B cell (primary cell): ENCODE measurements at regions of chr1 and their contacts with region 1.

Region 1: DNA sequence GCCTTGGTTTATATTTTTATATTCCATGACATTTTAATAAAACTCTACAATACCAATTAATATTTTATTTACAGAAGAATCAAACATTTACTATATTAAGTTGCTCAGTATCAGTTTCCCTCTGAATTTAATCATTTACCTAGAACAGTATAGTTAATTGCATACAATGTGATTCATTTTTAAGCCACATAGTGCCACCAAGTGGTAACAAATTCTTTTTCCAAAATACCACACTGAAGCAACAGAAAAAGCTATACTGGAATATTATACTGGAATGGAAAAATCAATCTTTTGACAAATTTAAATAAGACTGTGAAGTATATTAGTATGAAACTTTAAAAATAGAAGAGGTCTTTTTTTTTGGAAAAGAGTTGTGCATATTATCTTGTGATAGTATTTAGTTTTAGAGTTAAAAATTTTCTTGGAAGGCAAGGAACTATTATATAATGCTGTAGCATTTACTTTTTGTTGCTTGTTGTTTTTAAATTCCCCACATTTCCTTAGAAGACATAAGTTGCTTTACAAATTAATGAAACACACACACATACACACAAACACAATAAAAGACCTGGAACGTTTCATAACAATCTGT is 57.3 kb downstream of the ZNF644 start:
- DNase-seq: no peak
- ATAC-seq: no peak
- H3K4me3 ChIP-seq: no peak overlapping the region
- H3K4me3 Mint-ChIP-seq: no peak overlapping the region
- H3K27ac ChIP-seq: no peak overlapping the region
- H3K27ac Mint-ChIP-seq: no peak overlapping the region
- H3K4me1 ChIP-seq: no peaks in the 10 kb centered on the region
- H3K4me1 Mint-ChIP-seq: peaks cover 48% of the 10 kb centered on the region
- H3K27me3 ChIP-seq: no peaks in the 10 kb centered on the region
- H3K27me3 Mint-ChIP-seq: no peaks in the 10 kb centered on the region
- CTCF ChIP-seq: peak; percentile 12

Region 2: DNA sequence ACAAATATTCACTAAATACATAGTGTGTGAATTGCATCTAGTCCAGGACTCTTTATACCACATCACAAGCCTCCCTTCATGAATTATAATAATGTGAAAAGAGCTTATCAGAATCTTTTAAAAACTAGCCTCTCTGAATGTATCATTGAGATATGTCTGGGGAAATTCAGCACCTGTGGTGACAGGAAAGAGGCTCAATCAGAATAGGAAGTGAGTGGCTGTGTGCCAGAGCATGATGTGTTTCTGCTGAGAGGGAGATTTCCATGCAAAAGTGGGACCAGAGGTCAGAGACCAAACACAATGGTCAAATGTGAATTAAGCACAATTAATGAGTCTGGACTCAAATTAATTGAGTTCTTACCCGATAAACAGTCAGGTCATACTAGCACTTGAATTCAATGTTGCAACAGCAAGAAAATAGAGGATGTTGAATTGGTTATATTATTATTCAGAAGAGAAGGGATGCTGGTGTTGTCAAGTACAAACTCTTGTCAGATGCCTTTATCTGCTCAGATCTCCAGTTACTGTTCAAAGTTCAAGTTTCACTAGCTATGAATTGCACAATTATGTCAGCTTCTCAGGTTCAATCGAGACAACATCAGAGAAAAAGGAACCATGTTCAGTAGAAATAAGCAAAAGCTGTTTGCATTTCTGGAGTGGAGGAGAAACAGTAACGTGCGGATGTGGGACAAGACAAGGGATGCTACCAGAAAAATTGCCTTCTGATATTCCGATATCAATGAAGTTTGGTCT is 743.4 kb before region 1 on chr1:
- CTCF ChIA-PET with region 1: no interaction called
- POLR2A ChIA-PET with region 1: no interaction called
- intact Hi-C with region 1: no loop called
- DNase-seq: no peak
- ATAC-seq: no peak
- H3K4me3 ChIP-seq: no peak overlapping the region
- H3K4me3 Mint-ChIP-seq: no peak overlapping the region
- H3K27ac ChIP-seq: no peak overlapping the region
- H3K27ac Mint-ChIP-seq: no peak overlapping the region
- H3K4me1 ChIP-seq: no peaks in the 10 kb centered on the region
- H3K4me1 Mint-ChIP-seq: no peaks in the 10 kb centered on the region
- H3K27me3 ChIP-seq: no peaks in the 10 kb centered on the region
- H3K27me3 Mint-ChIP-seq: peaks cover 3% of the 10 kb centered on the region
- CTCF ChIP-seq: no peak

Region 3: DNA sequence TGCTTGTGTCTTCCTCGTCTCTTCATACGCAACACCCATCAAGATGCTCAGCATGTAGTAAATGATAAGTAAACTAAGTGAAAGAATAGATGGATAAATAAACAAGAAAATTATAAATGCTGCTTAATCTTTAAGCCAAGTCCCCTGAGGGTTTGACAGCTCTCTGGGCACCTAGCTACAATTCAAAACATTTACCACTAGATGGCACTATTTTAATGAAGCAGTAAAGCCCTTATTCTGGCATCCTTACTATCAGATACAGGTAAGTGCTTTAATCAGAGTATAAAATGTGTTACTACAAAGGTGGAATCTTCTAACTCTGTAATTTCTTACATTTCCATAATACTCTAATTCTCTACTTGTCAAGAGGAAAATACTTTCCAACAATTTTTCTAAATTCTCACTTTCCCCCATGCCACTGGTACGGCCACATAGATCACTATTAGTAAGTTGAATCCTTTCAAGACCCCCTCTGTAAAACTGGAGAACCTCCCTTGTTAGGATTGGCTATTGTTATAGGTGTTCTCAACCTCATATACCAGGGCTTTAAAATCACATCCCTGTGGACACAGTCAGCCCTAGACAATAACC is 385.2 kb before region 1 on chr1:
- CTCF ChIA-PET with region 1: interaction called, 8 read pairs
- POLR2A ChIA-PET with region 1: no interaction called
- intact Hi-C with region 1: loop called (anchors 2 kb)
- DNase-seq: peak; percentile 50
- ATAC-seq: no peak
- H3K4me3 ChIP-seq: no peak overlapping the region
- H3K4me3 Mint-ChIP-seq: no peak overlapping the region
- H3K27ac ChIP-seq: no peak overlapping the region
- H3K27ac Mint-ChIP-seq: no peak overlapping the region
- H3K4me1 ChIP-seq: no peaks in the 10 kb centered on the region
- H3K4me1 Mint-ChIP-seq: no peaks in the 10 kb centered on the region
- H3K27me3 ChIP-seq: no peaks in the 10 kb centered on the region
- H3K27me3 Mint-ChIP-seq: peaks cover 15% of the 10 kb centered on the region
- CTCF ChIP-seq: peak; percentile 83

Region 4: GRCh38 chr1:90721210-90722194 is 243.0 kb before region 1 on chr1:
- CTCF ChIA-PET with region 1: no interaction called
- POLR2A ChIA-PET with region 1: no interaction called
- intact Hi-C with region 1: loop called (anchors 10 kb)
- DNase-seq: peak; percentile 67
- ATAC-seq: no peak
- H3K4me3 ChIP-seq: no peak overlapping the region
- H3K4me3 Mint-ChIP-seq: no peak overlapping the region
- H3K27ac ChIP-seq: no peak overlapping the region
- H3K27ac Mint-ChIP-seq: no peak overlapping the region
- H3K4me1 ChIP-seq: peaks cover 48 to 68% of the 10 kb centered on the region in 2 donors
- H3K4me1 Mint-ChIP-seq: peaks cover 37% of the 10 kb centered on the region
- H3K27me3 ChIP-seq: peaks cover 0 to 93% (median 82%) of the 10 kb centered on the region in 4 experiments
- H3K27me3 Mint-ChIP-seq: peaks cover 79% of the 10 kb centered on the region
- CTCF ChIP-seq: peak; percentile 77

Region 5: GRCh38 chr1:90925928-90926869 is 38.3 kb before region 1 on chr1:
- CTCF ChIA-PET with region 1: no interaction called
- POLR2A ChIA-PET with region 1: no interaction called
- intact Hi-C with region 1: loop called (anchors 5 kb)
- DNase-seq: no peak
- ATAC-seq: no peak
- H3K4me3 ChIP-seq: no peak overlapping the region
- H3K4me3 Mint-ChIP-seq: no peak overlapping the region
- H3K27ac ChIP-seq: no peak overlapping the region
- H3K27ac Mint-ChIP-seq: peak overlapping the region; percentile 60
- H3K4me1 ChIP-seq: peaks cover 0 to 27% of the 10 kb centered on the region in 2 donors
- H3K4me1 Mint-ChIP-seq: peaks cover 65% of the 10 kb centered on the region
- H3K27me3 ChIP-seq: no peaks in the 10 kb centered on the region
- H3K27me3 Mint-ChIP-seq: no peaks in the 10 kb centered on the region
- CTCF ChIP-seq: no peak